MCF 10A (cell line): ENCODE measurements at regions of chr7 and their contacts with region 1.

Region 1: DNA sequence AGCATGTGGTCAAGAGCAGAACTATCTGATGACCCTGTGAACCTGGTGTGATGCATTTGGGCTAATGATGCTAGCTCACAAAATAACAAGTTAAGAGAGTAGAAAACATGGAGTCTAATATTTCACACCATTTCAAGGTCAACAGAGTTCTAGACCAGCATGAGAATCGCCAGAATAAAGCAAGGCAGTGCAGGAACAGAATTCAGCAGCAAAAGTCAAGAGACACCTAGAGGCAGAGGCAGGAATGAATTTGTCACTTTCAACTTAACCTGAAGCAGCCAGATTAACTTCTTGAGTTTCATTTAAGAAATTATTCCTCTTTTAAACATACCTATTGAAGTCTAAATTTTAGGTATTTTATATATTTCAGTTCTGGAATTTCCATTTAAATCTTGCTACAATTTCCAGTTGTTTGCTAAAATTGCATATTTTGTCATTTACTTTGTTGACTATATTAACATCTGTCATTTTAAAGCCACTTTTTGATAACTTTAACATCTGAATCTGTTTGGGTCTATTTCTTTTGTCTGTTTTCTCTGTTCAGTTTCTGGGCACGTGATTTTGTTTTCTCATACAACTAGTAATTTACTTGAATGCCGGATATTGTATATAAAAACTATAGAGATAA is 44.2 kb upstream of the PRSS58 start:
- DNase-seq: peak; percentile 36
- H3K4me3 Mint-ChIP-seq: no peak overlapping the region
- H3K27ac Mint-ChIP-seq: no peak overlapping the region
- H3K4me1 Mint-ChIP-seq: no peaks in the 10 kb centered on the region
- H3K27me3 Mint-ChIP-seq: peaks cover 50% of the 10 kb centered on the region
- CTCF ChIP-seq: peak; percentile 54

Region 2: DNA sequence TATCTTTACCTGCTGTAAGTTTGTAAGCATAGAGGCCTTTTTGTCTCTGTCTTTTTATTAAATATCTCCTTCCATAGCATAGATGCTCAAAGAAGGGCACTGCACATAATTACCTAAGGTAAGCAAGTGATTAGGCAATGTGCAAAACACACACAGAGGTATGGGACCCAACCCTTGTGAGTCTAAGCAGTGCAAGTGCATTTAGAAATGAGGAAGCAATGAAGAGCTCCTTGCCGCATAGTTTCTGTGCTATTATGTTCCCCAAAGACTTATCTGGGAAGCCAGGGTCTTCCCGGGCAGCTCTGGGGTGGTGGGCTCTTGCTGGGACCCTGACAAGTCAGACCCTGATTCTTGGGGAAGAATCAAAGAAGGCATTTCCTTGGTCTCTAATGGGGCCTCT is 204.0 kb before region 1 on chr7:
- CTCF ChIA-PET with region 1: no interaction called
- POLR2A ChIA-PET with region 1: no interaction called
- intact Hi-C with region 1: no loop called
- DNase-seq: no peak
- H3K4me3 Mint-ChIP-seq: no peak overlapping the region
- H3K27ac Mint-ChIP-seq: no peak overlapping the region
- H3K4me1 Mint-ChIP-seq: no peaks in the 10 kb centered on the region
- H3K27me3 Mint-ChIP-seq: no peaks in the 10 kb centered on the region
- CTCF ChIP-seq: no peak

Region 3: GRCh38 chr7:142153400-142153799 is 148.6 kb before region 1 on chr7:
- CTCF ChIA-PET with region 1: no interaction called
- POLR2A ChIA-PET with region 1: no interaction called
- intact Hi-C with region 1: loop called (anchors 10 kb)
- DNase-seq: peak; percentile 43
- H3K4me3 Mint-ChIP-seq: no peak overlapping the region
- H3K27ac Mint-ChIP-seq: no peak overlapping the region
- H3K4me1 Mint-ChIP-seq: no peaks in the 10 kb centered on the region
- H3K27me3 Mint-ChIP-seq: no peaks in the 10 kb centered on the region
- CTCF ChIP-seq: no peak

Region 4: DNA sequence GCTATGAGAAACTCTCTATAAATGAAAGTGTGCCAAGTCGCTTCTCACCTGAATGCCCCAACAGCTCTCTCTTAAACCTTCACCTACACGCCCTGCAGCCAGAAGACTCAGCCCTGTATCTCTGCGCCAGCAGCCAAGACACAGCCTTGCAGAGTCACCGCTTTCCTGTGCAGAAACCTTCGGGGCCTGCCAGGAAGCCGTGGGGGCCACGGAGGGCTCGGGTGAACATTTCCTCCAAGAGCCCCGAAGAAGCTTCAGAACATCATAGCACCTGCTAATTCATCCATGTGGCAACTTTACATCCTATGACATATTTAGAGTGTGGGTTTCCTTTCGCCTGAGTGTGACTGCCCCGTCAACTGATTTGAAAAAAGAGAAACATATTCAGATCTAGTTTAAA is 11.5 kb after region 1 on chr7:
- CTCF ChIA-PET with region 1: interaction called, 20 read pairs
- POLR2A ChIA-PET with region 1: no interaction called
- intact Hi-C with region 1: no loop called
- DNase-seq: no peak
- H3K4me3 Mint-ChIP-seq: no peak overlapping the region
- H3K27ac Mint-ChIP-seq: no peak overlapping the region
- H3K4me1 Mint-ChIP-seq: no peaks in the 10 kb centered on the region
- H3K27me3 Mint-ChIP-seq: peaks cover 93% of the 10 kb centered on the region
- CTCF ChIP-seq: no peak

Region 5: DNA sequence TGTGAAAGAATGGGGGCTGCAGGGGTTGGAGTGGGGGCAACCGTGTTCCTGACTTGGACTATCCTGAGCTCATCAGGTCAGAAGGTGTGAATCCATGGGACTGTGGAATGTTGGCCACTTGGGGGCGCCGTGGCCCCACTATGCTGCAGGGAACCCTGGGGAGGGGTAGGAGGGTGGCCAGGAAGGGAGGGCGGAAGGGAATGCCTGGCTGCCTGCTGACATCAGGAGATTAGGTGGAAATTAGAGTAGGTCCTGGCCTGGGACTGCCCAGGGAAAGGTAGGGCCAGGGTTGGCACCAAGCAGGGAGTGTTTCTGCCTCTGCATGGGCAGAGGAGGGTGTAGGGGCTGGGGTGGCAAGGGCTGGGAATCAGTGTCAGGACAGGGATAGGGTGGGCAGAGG is 21.7 kb after region 1 on chr7:
- CTCF ChIA-PET with region 1: interaction called, 26 read pairs
- POLR2A ChIA-PET with region 1: no interaction called
- intact Hi-C with region 1: no loop called
- DNase-seq: peak; percentile 57
- H3K4me3 Mint-ChIP-seq: no peak overlapping the region
- H3K27ac Mint-ChIP-seq: no peak overlapping the region
- H3K4me1 Mint-ChIP-seq: peaks cover 6% of the 10 kb centered on the region
- H3K27me3 Mint-ChIP-seq: peaks cover 39% of the 10 kb centered on the region
- CTCF ChIP-seq: peak; percentile 47

Region 6: GRCh38 chr7:142496545-142497041 is 194.6 kb after region 1 on chr7:
- CTCF ChIA-PET with region 1: no interaction called
- POLR2A ChIA-PET with region 1: no interaction called
- intact Hi-C with region 1: no loop called
- DNase-seq: peak; percentile 63
- H3K4me3 Mint-ChIP-seq: no peak overlapping the region
- H3K27ac Mint-ChIP-seq: no peak overlapping the region
- H3K4me1 Mint-ChIP-seq: peaks cover 26% of the 10 kb centered on the region
- H3K27me3 Mint-ChIP-seq: peaks cover 28% of the 10 kb centered on the region
- CTCF ChIP-seq: peak; percentile 81